Ovary (tissue), 10 donors: ENCODE measurements at regions of chr19 and their contacts with region 1.

Region 1: DNA sequence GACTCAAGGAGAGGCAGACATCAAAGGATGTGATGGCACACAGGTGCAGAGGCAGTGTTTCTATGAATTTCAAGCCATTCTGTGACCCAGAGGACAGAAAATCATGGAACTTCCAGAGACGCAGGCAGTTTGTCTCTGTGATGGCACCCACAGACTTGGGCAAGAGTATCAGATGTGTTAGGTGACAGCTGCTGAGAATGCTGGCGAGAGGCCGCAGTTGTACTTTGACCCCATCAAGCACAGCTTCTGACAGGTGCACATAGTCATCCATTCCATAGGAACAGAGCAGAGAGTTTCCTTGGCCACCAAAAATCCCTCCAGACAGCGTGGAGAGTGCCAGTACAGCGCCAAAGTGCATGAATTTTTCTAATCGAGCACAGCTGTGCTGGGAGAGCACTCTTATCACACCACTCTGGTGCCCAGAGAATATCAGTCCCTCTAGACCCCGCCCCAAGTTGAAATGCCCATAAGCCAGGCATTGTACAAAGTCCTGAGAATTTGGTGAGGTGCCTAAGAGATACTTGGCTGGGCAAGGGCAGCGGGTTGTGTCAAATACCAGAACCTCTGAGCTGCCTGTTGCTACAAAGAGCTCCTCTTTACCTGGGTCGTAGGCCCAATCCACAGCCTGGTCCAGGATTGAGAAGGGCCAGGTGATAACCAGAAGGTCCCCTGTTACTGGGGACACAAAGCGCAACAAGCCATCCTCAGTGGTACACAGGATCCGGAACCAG is 12.4 kb downstream of the WDR87 start:
- DNase-seq: no peak
- H3K4me3 ChIP-seq: no peak overlapping the region
- H3K27ac ChIP-seq: no peak overlapping the region
- H3K4me1 ChIP-seq: no peaks in the 10 kb centered on the region
- H3K27me3 ChIP-seq: no peaks in the 10 kb centered on the region
- CTCF ChIP-seq: no peak
- EP300 ChIP-seq: no peak
- POLR2A ChIP-seq: no peak

Region 2: GRCh38 chr19:37988758-37989635 is 95.0 kb after region 1 on chr19:
- intact Hi-C with region 1: no loop called
- DNase-seq: no peak
- H3K4me3 ChIP-seq: no peak overlapping the region
- H3K27ac ChIP-seq: no peak overlapping the region
- H3K4me1 ChIP-seq: no peaks in the 10 kb centered on the region
- H3K27me3 ChIP-seq: no peaks in the 10 kb centered on the region
- CTCF ChIP-seq: no peak
- EP300 ChIP-seq: no peak
- POLR2A ChIP-seq: no peak

Region 3: GRCh38 chr19:38003438-38004185 is 109.6 kb after region 1 on chr19:
- intact Hi-C with region 1: no loop called
- DNase-seq: peak; percentile 48 to 69 (median 61)
- H3K4me3 ChIP-seq: peak overlapping the region; percentile 43
- H3K27ac ChIP-seq: peak overlapping the region; percentile 26 to 45
- H3K4me1 ChIP-seq: peaks cover 7% of the 10 kb centered on the region
- H3K27me3 ChIP-seq: no peaks in the 10 kb centered on the region
- CTCF ChIP-seq: no peak
- EP300 ChIP-seq: no peak
- POLR2A ChIP-seq: no peak

Region 4: DNA sequence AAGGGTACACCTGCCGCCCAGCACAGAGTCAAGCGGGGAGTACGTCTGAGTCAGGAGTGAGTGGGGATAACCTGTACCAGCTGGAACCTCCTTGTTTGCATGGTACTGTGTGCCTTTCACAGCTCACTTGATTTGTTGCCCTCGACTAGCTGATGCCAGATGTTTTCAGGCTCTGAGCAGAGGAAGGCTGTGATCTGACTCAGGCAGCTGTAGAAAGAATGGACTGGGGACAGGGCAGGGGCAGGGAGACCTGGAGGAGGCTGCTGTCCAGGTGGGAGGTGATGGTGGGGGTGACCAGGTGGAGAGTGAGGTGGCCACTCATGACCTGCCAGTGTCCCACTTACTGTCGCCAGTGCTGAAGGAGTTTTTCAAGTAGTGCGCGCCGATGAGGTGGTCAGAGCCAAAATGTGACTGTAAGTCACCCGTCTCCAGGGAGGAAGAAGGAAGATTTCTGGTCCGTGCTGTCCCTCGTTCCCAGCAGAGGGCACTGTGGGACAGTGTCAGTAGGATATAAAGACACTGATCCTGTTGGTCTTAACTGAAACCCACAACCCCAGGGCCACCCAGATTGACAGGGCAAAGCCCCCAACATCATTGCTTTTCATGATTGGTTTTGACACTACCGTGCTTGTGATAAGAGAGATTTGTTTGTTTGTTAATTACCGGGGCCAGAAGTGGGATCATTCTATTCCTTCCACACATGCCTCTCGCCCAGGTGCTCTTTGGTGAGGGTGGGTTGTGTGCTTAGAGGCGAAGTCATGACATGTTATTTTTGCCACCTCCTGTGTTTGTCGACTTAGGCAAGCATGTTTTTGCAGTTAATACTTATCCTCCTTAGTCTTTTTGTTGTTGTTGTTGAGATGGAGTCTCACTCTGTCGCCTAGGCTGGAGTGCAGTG is 201.7 kb after region 1 on chr19:
- intact Hi-C with region 1: loop called in 1 of 4 experiments (anchors 10 kb)
- DNase-seq: peak; percentile 42 to 66 (median 53)
- H3K4me3 ChIP-seq: no peak overlapping the region
- H3K27ac ChIP-seq: no peak overlapping the region
- H3K4me1 ChIP-seq: no peaks in the 10 kb centered on the region
- H3K27me3 ChIP-seq: no peaks in the 10 kb centered on the region
- CTCF ChIP-seq: no peak
- EP300 ChIP-seq: no peak
- POLR2A ChIP-seq: no peak